Panc1 (cell line): ENCODE measurements at regions of chr6 and their contacts with region 1.

Region 1: DNA sequence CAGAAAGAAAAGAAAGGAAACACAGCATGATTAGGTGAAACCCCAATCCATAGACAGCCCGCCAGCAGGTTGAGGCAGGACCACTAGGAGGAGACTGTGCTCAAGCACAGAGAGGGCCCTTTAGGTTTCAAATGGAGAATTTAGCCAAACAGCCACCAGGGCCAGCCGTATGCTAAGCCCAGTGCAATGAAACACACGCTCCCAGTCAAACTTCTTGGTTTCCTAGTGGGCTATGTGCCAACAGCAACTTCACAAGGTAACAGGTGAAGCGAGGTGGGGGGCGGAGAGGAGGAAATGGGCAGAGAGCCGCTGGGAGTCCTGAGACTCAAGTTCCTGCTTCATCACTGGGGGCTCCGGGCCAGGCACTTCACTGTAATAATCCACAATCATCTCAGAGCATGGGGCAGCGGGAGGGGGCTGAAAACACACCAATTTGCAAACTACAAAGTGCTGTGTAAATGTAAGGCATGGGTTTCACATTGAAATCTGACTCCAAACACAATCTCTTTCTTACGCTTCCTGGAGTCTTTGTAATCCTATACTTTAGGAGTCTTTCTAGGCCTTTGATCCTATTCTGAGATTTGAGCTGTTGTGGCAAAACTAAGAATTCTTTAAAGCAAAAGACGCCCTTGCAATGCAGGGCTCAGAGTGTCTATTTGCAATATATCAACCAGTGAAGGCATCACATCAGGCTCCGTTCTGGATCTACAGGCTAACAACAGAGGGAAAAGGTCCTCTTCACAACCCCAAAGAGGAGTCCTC is 117.3 kb downstream of the OPRM1 start:
- DNase-seq: peak; percentile 8
- ATAC-seq: peak; percentile 83
- H3K4me3 ChIP-seq: no peak overlapping the region
- H3K27ac ChIP-seq: no peak overlapping the region
- H3K4me1 ChIP-seq: no peaks in the 10 kb centered on the region
- H3K27me3 ChIP-seq: no peaks in the 10 kb centered on the region
- CTCF ChIP-seq: peak; percentile 73

Region 2: GRCh38 chr6:154276810-154277628 is 120.7 kb after region 1 on chr6:
- CTCF ChIA-PET with region 1: no interaction called
- POLR2A ChIA-PET with region 1: no interaction called
- in situ Hi-C with region 1: no loop called
- intact Hi-C with region 1: loop called (anchors 1 kb)
- DNase-seq: no peak
- ATAC-seq: peak; percentile 80
- H3K4me3 ChIP-seq: peak overlapping the region; percentile 4 to 34; a peak in 3 of 4 replicates
- H3K27ac ChIP-seq: no peak overlapping the region
- H3K4me1 ChIP-seq: no peaks in the 10 kb centered on the region
- H3K27me3 ChIP-seq: no peaks in the 10 kb centered on the region
- CTCF ChIP-seq: peak; percentile 69; the same call in 1 of the 2 replicates

Region 3: GRCh38 chr6:154370545-154370944 is 214.2 kb after region 1 on chr6:
- CTCF ChIA-PET with region 1: no interaction called
- POLR2A ChIA-PET with region 1: no interaction called
- in situ Hi-C with region 1: no loop called
- intact Hi-C with region 1: loop called (anchors 2 kb)
- DNase-seq: no peak
- ATAC-seq: peak; percentile 84
- H3K4me3 ChIP-seq: no peak overlapping the region
- H3K27ac ChIP-seq: peak overlapping the region; percentile 32; the same call in 1 of the 2 replicates
- H3K4me1 ChIP-seq: no peaks in the 10 kb centered on the region
- H3K27me3 ChIP-seq: no peaks in the 10 kb centered on the region
- CTCF ChIP-seq: peak; percentile 75

Region 4: GRCh38 chr6:154408891-154409500 is 252.7 kb after region 1 on chr6:
- CTCF ChIA-PET with region 1: no interaction called
- POLR2A ChIA-PET with region 1: no interaction called
- in situ Hi-C with region 1: no loop called
- intact Hi-C with region 1: loop called (anchors 2 kb)
- DNase-seq: no peak
- ATAC-seq: peak; percentile 75; the same call in 1 of the 2 replicates
- H3K4me3 ChIP-seq: no peak overlapping the region
- H3K27ac ChIP-seq: no peak overlapping the region
- H3K4me1 ChIP-seq: peaks cover 11% of the 10 kb centered on the region
- H3K27me3 ChIP-seq: no peaks in the 10 kb centered on the region
- CTCF ChIP-seq: peak; percentile 57; the same call in 1 of the 2 replicates

Region 5: GRCh38 chr6:154510143-154510905 is 354.0 kb after region 1 on chr6 and contains the start of gene CNKSR3:
- CTCF ChIA-PET with region 1: no interaction called
- POLR2A ChIA-PET with region 1: no interaction called
- in situ Hi-C with region 1: no loop called
- intact Hi-C with region 1: loop called (anchors 10 kb)
- DNase-seq: peak; percentile 55
- ATAC-seq: peak; percentile 92
- H3K4me3 ChIP-seq: peak within 1 kb of the TSS; percentile 63 to 87
- H3K27ac ChIP-seq: peak within 1 kb of the TSS; percentile 71
- H3K4me1 ChIP-seq: peaks cover 25% of the 10 kb centered on the region
- H3K27me3 ChIP-seq: no peaks in the 10 kb centered on the region
- CTCF ChIP-seq: no peak
- total RNA-seq, gene CNKSR3: 18.2 TPM

Region 6: GRCh38 chr6:154675602-154676088 is 519.3 kb after region 1 on chr6:
- CTCF ChIA-PET with region 1: no interaction called
- POLR2A ChIA-PET with region 1: no interaction called
- in situ Hi-C with region 1: no loop called
- intact Hi-C with region 1: loop called (anchors 10 kb)
- DNase-seq: peak; percentile 98
- ATAC-seq: peak; percentile 99
- H3K4me3 ChIP-seq: no peak overlapping the region
- H3K27ac ChIP-seq: no peak overlapping the region
- H3K4me1 ChIP-seq: no peaks in the 10 kb centered on the region
- H3K27me3 ChIP-seq: no peaks in the 10 kb centered on the region
- CTCF ChIP-seq: peak; percentile 99

Region 7: GRCh38 chr6:154805288-154805911 is 649.1 kb after region 1 on chr6:
- CTCF ChIA-PET with region 1: no interaction called
- POLR2A ChIA-PET with region 1: no interaction called
- in situ Hi-C with region 1: no loop called
- intact Hi-C with region 1: no loop called
- DNase-seq: no peak
- ATAC-seq: no peak
- H3K4me3 ChIP-seq: no peak overlapping the region
- H3K27ac ChIP-seq: no peak overlapping the region
- H3K4me1 ChIP-seq: no peaks in the 10 kb centered on the region
- H3K27me3 ChIP-seq: no peaks in the 10 kb centered on the region
- CTCF ChIP-seq: peak; percentile 52; the same call in 1 of the 2 replicates